ENCODE measurements at regions of chr14 and their contacts with region 1.

Region 1: DNA sequence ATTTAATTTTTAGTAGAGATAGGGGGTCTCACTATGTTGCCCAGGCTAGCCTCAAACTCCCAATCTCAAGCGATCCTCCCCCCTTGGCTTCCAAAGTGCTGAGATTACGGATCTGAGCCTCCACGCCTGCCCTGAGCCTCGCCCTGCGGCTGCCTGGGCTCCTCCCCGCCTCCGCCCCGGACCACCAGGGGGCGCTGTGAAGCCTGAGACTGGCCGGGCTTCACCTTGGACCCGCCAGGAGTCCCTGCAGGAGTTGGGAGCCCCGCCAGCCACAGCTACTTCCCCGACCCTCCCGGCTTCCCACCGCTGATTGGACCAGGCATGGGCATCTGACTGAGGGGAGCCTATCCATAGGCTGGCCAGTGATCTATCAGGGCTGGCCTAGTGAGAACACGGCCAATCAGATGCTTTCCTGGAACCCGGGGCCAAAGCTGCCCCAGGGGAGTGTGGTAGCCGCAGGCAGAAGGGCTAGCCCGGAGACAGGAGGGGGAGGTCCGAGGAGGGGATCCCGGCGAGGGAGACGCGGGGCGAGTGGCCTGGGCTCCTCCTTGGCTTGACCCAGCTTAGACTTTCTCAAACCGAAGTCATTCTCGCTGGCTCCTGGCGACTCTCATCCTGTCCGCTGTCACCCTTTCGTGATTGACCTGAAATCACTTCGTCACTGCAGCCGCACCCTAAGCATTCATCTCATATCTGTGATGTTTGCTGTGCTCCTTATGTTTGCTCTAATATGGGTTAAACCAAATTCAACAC is 15.1 kb upstream of the ANKRD9 start:
- DNase-seq: peak; percentile 99
- H3K4me3 ChIP-seq: peak overlapping the region; percentile 46
- H3K4me3 Mint-ChIP-seq: peak overlapping the region; percentile 94
- H3K27ac Mint-ChIP-seq: peak overlapping the region; percentile 92
- H3K4me1 ChIP-seq: peaks cover 11% of the 10 kb centered on the region; the same call in 1 of the 2 replicates
- H3K4me1 Mint-ChIP-seq: peaks cover 7% of the 10 kb centered on the region
- H3K27me3 ChIP-seq: no peaks in the 10 kb centered on the region
- H3K27me3 Mint-ChIP-seq: no peaks in the 10 kb centered on the region
- CTCF ChIP-seq: peak; percentile 92 to 97

Region 2: GRCh38 chr14:102071283-102071998 is 453.2 kb before region 1 on chr14:
- CTCF ChIA-PET with region 1: no interaction called
- POLR2A ChIA-PET with region 1: no interaction called
- intact Hi-C with region 1: no loop called
- DNase-seq: no peak
- H3K4me3 ChIP-seq: no peak overlapping the region
- H3K4me3 Mint-ChIP-seq: no peak overlapping the region
- H3K27ac Mint-ChIP-seq: no peak overlapping the region
- H3K4me1 ChIP-seq: no peaks in the 10 kb centered on the region
- H3K4me1 Mint-ChIP-seq: peaks cover 6% of the 10 kb centered on the region
- H3K27me3 ChIP-seq: no peaks in the 10 kb centered on the region
- H3K27me3 Mint-ChIP-seq: no peaks in the 10 kb centered on the region
- CTCF ChIP-seq: no peak

Region 3: GRCh38 chr14:102437997-102438915 is 86.4 kb before region 1 on chr14:
- CTCF ChIA-PET with region 1: interaction called, 13 read pairs
- POLR2A ChIA-PET with region 1: no interaction called
- intact Hi-C with region 1: no loop called
- DNase-seq: peak; percentile 85 to 89
- H3K4me3 ChIP-seq: no peak overlapping the region; the same call in 1 of the 2 replicates
- H3K4me3 Mint-ChIP-seq: peak overlapping the region; percentile 28
- H3K27ac Mint-ChIP-seq: no peak overlapping the region
- H3K4me1 ChIP-seq: no peaks in the 10 kb centered on the region
- H3K4me1 Mint-ChIP-seq: no peaks in the 10 kb centered on the region
- H3K27me3 ChIP-seq: no peaks in the 10 kb centered on the region
- H3K27me3 Mint-ChIP-seq: no peaks in the 10 kb centered on the region
- CTCF ChIP-seq: peak; percentile 77 to 84

Region 4: DNA sequence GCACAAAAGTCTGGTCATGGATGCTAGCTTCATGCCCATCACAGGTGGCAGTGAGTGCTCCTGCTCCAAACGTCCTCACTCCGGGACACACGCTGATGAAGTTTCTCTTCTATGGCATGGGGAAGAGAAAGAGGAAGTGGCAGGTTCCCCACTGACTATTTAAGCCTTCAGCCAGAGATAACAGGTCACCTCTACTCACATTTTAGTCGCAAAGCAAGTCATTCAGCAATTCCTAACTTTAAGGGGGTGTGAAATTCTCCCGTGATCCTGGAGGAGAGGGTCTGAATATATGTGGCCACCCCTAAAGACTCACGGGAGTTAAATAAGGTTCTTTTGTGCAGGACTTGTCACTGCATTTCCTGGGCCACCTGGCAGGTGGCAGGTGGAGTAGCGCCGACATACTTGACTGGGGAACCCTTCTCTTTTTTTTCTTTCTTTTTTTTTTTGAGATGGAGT is 49.0 kb after region 1 on chr14:
- CTCF ChIA-PET with region 1: interaction called, 15 read pairs
- POLR2A ChIA-PET with region 1: interaction called, 11 read pairs
- intact Hi-C with region 1: loop called (anchors 1 kb)
- DNase-seq: no peak
- H3K4me3 ChIP-seq: no peak overlapping the region
- H3K4me3 Mint-ChIP-seq: no peak overlapping the region
- H3K27ac Mint-ChIP-seq: no peak overlapping the region
- H3K4me1 ChIP-seq: peaks cover 48% of the 10 kb centered on the region
- H3K4me1 Mint-ChIP-seq: peaks cover 16% of the 10 kb centered on the region
- H3K27me3 ChIP-seq: no peaks in the 10 kb centered on the region
- H3K27me3 Mint-ChIP-seq: no peaks in the 10 kb centered on the region
- CTCF ChIP-seq: no peak

Region 5: GRCh38 chr14:102591889-102592763 is 67.5 kb after region 1 on chr14 and contains the start of gene RCOR1:
- CTCF ChIA-PET with region 1: interaction called, 9 read pairs
- POLR2A ChIA-PET with region 1: interaction called, 12 read pairs
- intact Hi-C with region 1: loop called (anchors 1 kb)
- DNase-seq: peak; percentile 97 to 98
- H3K4me3 ChIP-seq: peak within 1 kb of the TSS; percentile 99
- H3K4me3 Mint-ChIP-seq: peak within 1 kb of the TSS; percentile 79
- H3K27ac Mint-ChIP-seq: peak within 1 kb of the TSS; percentile 82
- H3K4me1 ChIP-seq: peaks cover 29% of the 10 kb centered on the region
- H3K4me1 Mint-ChIP-seq: peaks cover 18% of the 10 kb centered on the region
- H3K27me3 ChIP-seq: no peaks in the 10 kb centered on the region
- H3K27me3 Mint-ChIP-seq: no peaks in the 10 kb centered on the region
- CTCF ChIP-seq: no peak
- total RNA-seq, gene RCOR1: 31.0 and 33.6 TPM in 2 replicates

Region 6: DNA sequence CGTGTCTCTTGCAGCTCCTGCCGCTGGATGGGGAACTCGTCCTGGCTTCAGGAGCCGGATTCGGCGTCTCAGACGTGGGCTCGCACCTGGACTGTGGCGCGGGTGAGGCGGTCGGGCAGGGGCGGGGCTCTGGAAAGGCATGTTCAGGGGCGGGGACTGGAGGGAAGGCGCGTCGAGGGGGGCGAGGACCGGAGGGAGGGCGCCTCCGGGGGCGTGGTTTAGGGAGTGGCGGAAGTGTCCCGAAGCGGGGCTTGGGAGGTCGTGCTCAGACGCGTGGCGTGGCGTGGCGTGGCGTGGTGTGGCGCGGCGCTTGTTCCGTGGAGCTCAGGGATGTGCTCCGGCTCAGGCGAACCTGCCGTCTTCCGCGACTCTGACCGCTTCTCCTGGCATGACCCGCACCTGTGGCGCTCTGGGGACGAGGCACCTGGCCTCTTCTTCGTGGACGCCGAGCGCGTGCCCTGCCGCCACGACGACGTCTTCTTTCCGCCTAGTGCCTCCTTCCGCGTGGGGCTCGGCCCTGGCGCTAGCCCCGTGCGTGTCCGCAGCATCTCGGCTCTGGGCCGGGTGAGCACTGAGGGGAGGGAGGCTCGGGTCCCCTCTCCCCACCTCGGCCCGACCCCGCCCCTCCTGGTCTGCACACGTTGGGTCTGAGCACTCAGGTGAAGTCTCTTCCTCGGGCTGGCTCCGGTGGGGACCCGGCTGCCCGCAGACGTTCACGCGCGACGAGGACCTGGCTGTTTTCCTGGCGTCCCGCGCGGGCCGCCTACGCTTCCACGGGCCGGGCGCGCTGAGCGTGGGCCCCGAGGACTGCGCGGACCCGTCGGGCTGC is 404.0 kb after region 1 on chr14:
- CTCF ChIA-PET with region 1: no interaction called
- POLR2A ChIA-PET with region 1: no interaction called
- intact Hi-C with region 1: loop called (anchors 10 kb)
- DNase-seq: peak; percentile 95
- H3K4me3 ChIP-seq: peak overlapping the region; percentile 79
- H3K4me3 Mint-ChIP-seq: peak overlapping the region; percentile 79
- H3K27ac Mint-ChIP-seq: peak overlapping the region; percentile 80
- H3K4me1 ChIP-seq: peaks cover 18% of the 10 kb centered on the region
- H3K4me1 Mint-ChIP-seq: no peaks in the 10 kb centered on the region
- H3K27me3 ChIP-seq: no peaks in the 10 kb centered on the region
- H3K27me3 Mint-ChIP-seq: no peaks in the 10 kb centered on the region
- CTCF ChIP-seq: no peak

Measured in Caco-2 (cell line).